Head of caudate nucleus (tissue), 42 donors: ENCODE measurements at regions of chr1 and their contacts with region 1.

Region 1: DNA sequence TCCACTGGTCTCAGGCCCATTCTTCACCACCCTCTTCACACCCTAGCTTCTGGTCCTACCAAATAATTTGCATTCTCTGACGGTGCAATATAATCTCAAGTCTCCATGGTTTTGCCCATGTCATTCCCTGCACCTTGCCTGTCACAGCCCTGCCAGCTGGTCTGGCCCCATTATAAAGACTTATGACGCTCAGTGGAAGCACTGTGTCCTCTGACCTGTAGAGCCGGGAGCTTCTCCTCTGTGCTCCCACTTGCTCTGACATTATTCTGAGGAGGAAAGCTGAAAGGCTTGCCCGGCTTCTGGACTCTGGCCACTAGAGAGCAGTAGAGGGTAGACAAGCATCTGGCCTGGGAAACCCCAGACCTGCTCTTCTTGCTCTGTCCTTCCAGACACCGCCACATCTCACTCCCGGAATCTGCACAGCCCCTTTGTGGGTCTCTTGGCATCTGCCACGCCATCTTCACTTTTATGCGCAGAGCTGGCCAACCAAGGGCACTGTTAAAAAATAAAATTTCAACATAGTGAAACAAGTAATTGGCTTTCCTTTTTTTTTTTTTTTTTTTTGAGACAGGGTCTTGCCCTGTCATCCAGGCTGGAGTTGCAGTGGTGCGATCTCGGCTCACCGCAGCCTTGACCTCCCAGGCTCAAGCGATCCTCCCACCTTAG is 44.4 kb downstream of the NENF start:
- DNase-seq: peak; percentile 71 to 95 (median 90)

Region 2: GRCh38 chr1:212549503-212550017 is 72.4 kb after region 1 on chr1:
- intact Hi-C with region 1: loop called (anchors 5 kb)
- DNase-seq: no peak

Region 3: DNA sequence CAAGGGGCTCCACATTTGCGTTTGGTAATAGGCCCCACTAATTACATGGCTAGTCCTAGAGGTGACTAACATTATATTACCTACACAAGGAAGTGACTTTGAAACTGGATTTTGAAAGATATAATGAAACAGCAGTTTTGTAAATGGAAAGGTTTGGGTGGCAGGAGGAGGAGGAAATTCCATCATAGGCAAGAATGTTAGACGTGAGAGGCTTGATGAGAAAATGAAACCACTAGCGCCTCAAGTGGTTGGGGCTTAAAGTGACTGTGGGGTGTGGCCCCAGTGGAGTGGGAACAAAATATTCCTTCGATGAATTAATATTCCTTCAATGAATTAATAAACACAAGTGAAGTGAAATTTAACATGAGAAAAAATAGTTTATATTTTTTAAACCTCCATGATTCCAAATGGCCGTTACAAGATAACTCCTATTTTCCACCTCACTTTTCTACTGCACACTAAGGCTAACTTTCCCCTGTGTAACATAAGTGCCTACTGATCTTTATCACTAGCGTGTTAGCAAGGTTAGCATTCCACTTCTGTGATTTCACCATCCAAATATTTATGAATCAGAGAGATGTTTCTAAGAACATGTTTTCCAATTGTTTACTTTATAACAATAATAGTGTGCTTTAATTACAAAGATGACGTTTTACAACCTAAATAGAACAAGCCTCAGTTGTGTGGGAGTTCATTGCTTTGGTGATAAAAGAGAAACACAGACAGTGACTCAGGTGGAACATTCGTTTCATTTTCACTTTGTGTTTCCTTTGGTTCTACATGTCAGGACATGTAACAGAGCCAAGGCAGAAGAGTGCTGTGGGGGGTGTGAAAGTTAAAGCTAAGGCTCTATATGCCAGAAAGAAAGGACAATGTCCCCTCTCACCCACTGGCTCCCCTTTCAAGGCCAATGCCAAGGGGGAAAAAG is 118.9 kb after region 1 on chr1:
- intact Hi-C with region 1: no loop called
- DNase-seq: no peak

Region 4: GRCh38 chr1:212782422-212783154 is 305.4 kb after region 1 on chr1:
- intact Hi-C with region 1: loop called (anchors 10 kb)
- DNase-seq: no peak